Caco-2 (cell line): ENCODE measurements at regions of chr7 and their contacts with region 1.

Region 1: GRCh38 chr7:30062591-30062990 is 34.4 kb downstream of the PLEKHA8 start:
- DNase-seq: no peak
- H3K4me3 ChIP-seq: no peak overlapping the region
- H3K4me3 Mint-ChIP-seq: no peak overlapping the region
- H3K27ac Mint-ChIP-seq: no peak overlapping the region
- H3K4me1 ChIP-seq: no peaks in the 10 kb centered on the region
- H3K4me1 Mint-ChIP-seq: no peaks in the 10 kb centered on the region
- H3K27me3 ChIP-seq: no peaks in the 10 kb centered on the region
- H3K27me3 Mint-ChIP-seq: no peaks in the 10 kb centered on the region
- CTCF ChIP-seq: peak; percentile 47 to 73

Region 2: GRCh38 chr7:29748286-29749108 is 314.1 kb before region 1 on chr7:
- CTCF ChIA-PET with region 1: interaction called, 4 read pairs
- POLR2A ChIA-PET with region 1: no interaction called
- intact Hi-C with region 1: loop called (anchors 1 kb)
- DNase-seq: peak in 1 of 2 experiments; percentile 29
- H3K4me3 ChIP-seq: no peak overlapping the region
- H3K4me3 Mint-ChIP-seq: no peak overlapping the region
- H3K27ac Mint-ChIP-seq: no peak overlapping the region
- H3K4me1 ChIP-seq: no peaks in the 10 kb centered on the region
- H3K4me1 Mint-ChIP-seq: peaks cover 7% of the 10 kb centered on the region
- H3K27me3 ChIP-seq: no peaks in the 10 kb centered on the region; the same call in 1 of the 2 replicates
- H3K27me3 Mint-ChIP-seq: peaks cover 20% of the 10 kb centered on the region
- CTCF ChIP-seq: peak; percentile 62 to 64

Region 3: GRCh38 chr7:29878081-29878688 is 184.4 kb before region 1 on chr7:
- CTCF ChIA-PET with region 1: interaction called, 6 read pairs
- POLR2A ChIA-PET with region 1: no interaction called
- intact Hi-C with region 1: loop called (anchors 1 kb)
- DNase-seq: peak in 1 of 2 experiments; percentile 26
- H3K4me3 ChIP-seq: no peak overlapping the region
- H3K4me3 Mint-ChIP-seq: no peak overlapping the region
- H3K27ac Mint-ChIP-seq: no peak overlapping the region
- H3K4me1 ChIP-seq: no peaks in the 10 kb centered on the region
- H3K4me1 Mint-ChIP-seq: no peaks in the 10 kb centered on the region
- H3K27me3 ChIP-seq: no peaks in the 10 kb centered on the region; the same call in 1 of the 2 replicates
- H3K27me3 Mint-ChIP-seq: peaks cover 6% of the 10 kb centered on the region
- CTCF ChIP-seq: peak; percentile 57 to 58

Region 4: GRCh38 chr7:29946428-29947186 is 116.0 kb before region 1 on chr7:
- CTCF ChIA-PET with region 1: interaction called, 4 read pairs
- POLR2A ChIA-PET with region 1: no interaction called
- intact Hi-C with region 1: loop called (anchors 2 kb)
- DNase-seq: peak in 1 of 2 experiments; percentile 22
- H3K4me3 ChIP-seq: no peak overlapping the region
- H3K4me3 Mint-ChIP-seq: no peak overlapping the region
- H3K27ac Mint-ChIP-seq: no peak overlapping the region
- H3K4me1 ChIP-seq: no peaks in the 10 kb centered on the region
- H3K4me1 Mint-ChIP-seq: no peaks in the 10 kb centered on the region
- H3K27me3 ChIP-seq: no peaks in the 10 kb centered on the region
- H3K27me3 Mint-ChIP-seq: no peaks in the 10 kb centered on the region
- CTCF ChIP-seq: peak; percentile 23 to 44

Region 5: DNA sequence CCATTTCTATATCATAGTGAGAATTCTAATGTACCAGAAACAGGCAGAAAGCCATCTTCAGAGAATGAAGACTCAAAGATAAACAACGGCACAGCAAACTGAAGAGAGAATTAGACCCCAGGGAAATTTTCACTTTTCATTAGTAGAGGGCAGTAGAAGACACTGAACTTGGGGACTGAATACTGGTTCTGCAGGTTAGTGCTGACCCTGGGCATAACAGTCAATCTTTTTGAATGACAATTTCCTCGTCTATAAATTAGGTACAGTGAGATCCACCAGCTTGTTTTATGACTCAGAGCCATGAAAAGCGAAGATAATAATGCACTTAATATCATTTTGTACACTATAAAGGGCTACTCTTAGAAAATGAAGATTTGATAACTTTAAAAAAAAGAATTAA is 49.8 kb before region 1 on chr7:
- CTCF ChIA-PET with region 1: no interaction called
- POLR2A ChIA-PET with region 1: no interaction called
- intact Hi-C with region 1: loop called (anchors 1 kb)
- DNase-seq: no peak
- H3K4me3 ChIP-seq: no peak overlapping the region
- H3K4me3 Mint-ChIP-seq: no peak overlapping the region
- H3K27ac Mint-ChIP-seq: no peak overlapping the region
- H3K4me1 ChIP-seq: no peaks in the 10 kb centered on the region
- H3K4me1 Mint-ChIP-seq: no peaks in the 10 kb centered on the region
- H3K27me3 ChIP-seq: no peaks in the 10 kb centered on the region
- H3K27me3 Mint-ChIP-seq: no peaks in the 10 kb centered on the region
- CTCF ChIP-seq: peak in 1 of 2 experiments; percentile 19

Region 6: DNA sequence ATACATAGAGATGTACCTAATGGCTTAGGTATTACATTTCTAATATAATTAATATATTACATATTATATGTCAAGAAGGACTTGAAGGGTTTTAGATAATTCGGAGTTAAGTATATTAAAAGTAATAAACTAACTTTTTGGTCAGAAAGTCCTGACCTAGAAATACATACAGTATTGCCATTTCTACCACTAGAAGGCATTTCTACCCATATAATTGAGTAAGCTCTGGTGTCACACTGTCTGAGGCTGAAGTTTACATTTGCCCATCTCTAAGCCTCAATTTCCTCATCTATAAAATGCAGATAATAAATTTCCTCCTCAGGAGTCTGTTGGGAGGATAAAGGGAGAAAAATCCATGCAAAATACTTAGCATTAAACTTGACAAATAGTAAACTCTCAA is 43.2 kb before region 1 on chr7:
- CTCF ChIA-PET with region 1: interaction called, 6 read pairs
- POLR2A ChIA-PET with region 1: no interaction called
- intact Hi-C with region 1: loop called (anchors 1 kb)
- DNase-seq: no peak
- H3K4me3 ChIP-seq: no peak overlapping the region
- H3K4me3 Mint-ChIP-seq: no peak overlapping the region
- H3K27ac Mint-ChIP-seq: no peak overlapping the region
- H3K4me1 ChIP-seq: no peaks in the 10 kb centered on the region
- H3K4me1 Mint-ChIP-seq: no peaks in the 10 kb centered on the region
- H3K27me3 ChIP-seq: no peaks in the 10 kb centered on the region
- H3K27me3 Mint-ChIP-seq: no peaks in the 10 kb centered on the region
- CTCF ChIP-seq: peak in 1 of 2 experiments; percentile 21

Region 7: GRCh38 chr7:30026229-30027064 is 36.1 kb before region 1 on chr7 and contains the start of gene FKBP14:
- CTCF ChIA-PET with region 1: interaction called, 15 read pairs
- POLR2A ChIA-PET with region 1: no interaction called
- intact Hi-C with region 1: loop called (anchors 2 kb)
- DNase-seq: peak; percentile 97 to 99
- H3K4me3 ChIP-seq: peak within 1 kb of the TSS; percentile 89
- H3K4me3 Mint-ChIP-seq: no peak within 1 kb of the TSS
- H3K27ac Mint-ChIP-seq: peak within 1 kb of the TSS; percentile 94
- H3K4me1 ChIP-seq: peaks cover 8% of the 10 kb centered on the region
- H3K4me1 Mint-ChIP-seq: peaks cover 15% of the 10 kb centered on the region
- H3K27me3 ChIP-seq: no peaks in the 10 kb centered on the region
- H3K27me3 Mint-ChIP-seq: no peaks in the 10 kb centered on the region
- CTCF ChIP-seq: no peak
- total RNA-seq, gene FKBP14: 17.5 and 20.3 TPM in 2 replicates